ENCODE measurements at regions of chr5 and their contacts with region 1.

Region 1: GRCh38 chr5:80255732-80256479 is at the start of gene SERINC5:
- DNase-seq: peak; percentile 75
- ATAC-seq: peak; percentile 84
- H3K4me3 Mint-ChIP-seq: peak within 1 kb of the TSS; percentile 96
- H3K27ac Mint-ChIP-seq: peak within 1 kb of the TSS; percentile 95
- H3K4me1 Mint-ChIP-seq: peaks cover 29% of the 10 kb centered on the region
- H3K27me3 Mint-ChIP-seq: no peaks in the 10 kb centered on the region
- CTCF ChIP-seq: no peak
- total RNA-seq, gene SERINC5: 4.4 and 5.3 TPM in 2 replicates

Region 2: GRCh38 chr5:79111960-79112702 is 1143.8 kb before region 1 on chr5:
- CTCF ChIA-PET with region 1: no interaction called
- POLR2A ChIA-PET with region 1: no interaction called
- intact Hi-C with region 1: no loop called
- DNase-seq: no peak
- ATAC-seq: no peak
- H3K4me3 Mint-ChIP-seq: no peak overlapping the region
- H3K27ac Mint-ChIP-seq: no peak overlapping the region
- H3K4me1 Mint-ChIP-seq: no peaks in the 10 kb centered on the region
- H3K27me3 Mint-ChIP-seq: peaks cover 50% of the 10 kb centered on the region
- CTCF ChIP-seq: no peak

Region 3: GRCh38 chr5:79514391-79515105 is 741.4 kb before region 1 on chr5:
- CTCF ChIA-PET with region 1: no interaction called
- POLR2A ChIA-PET with region 1: interaction called, 3 read pairs
- intact Hi-C with region 1: loop called (anchors 5 kb)
- DNase-seq: peak; percentile 85
- ATAC-seq: peak; percentile 77
- H3K4me3 Mint-ChIP-seq: peak overlapping the region; percentile 91
- H3K27ac Mint-ChIP-seq: peak overlapping the region; percentile 89
- H3K4me1 Mint-ChIP-seq: peaks cover 28% of the 10 kb centered on the region
- H3K27me3 Mint-ChIP-seq: peaks cover 24% of the 10 kb centered on the region
- CTCF ChIP-seq: no peak

Region 4: GRCh38 chr5:79990598-79991507 is 265.1 kb before region 1 on chr5 and contains the start of gene MTX3:
- CTCF ChIA-PET with region 1: no interaction called
- POLR2A ChIA-PET with region 1: interaction called, 3 read pairs
- intact Hi-C with region 1: loop called (anchors 1 kb)
- DNase-seq: peak; percentile 74
- ATAC-seq: peak; percentile 95
- H3K4me3 Mint-ChIP-seq: peak within 1 kb of the TSS; percentile 88
- H3K27ac Mint-ChIP-seq: peak within 1 kb of the TSS; percentile 84
- H3K4me1 Mint-ChIP-seq: peaks cover 23% of the 10 kb centered on the region
- H3K27me3 Mint-ChIP-seq: peaks cover 2% of the 10 kb centered on the region
- CTCF ChIP-seq: no peak
- total RNA-seq, gene MTX3: 20.0 and 21.4 TPM in 2 replicates

Region 5: GRCh38 chr5:80141147-80141671 is 114.7 kb before region 1 on chr5:
- CTCF ChIA-PET with region 1: no interaction called
- POLR2A ChIA-PET with region 1: interaction called, 12 read pairs
- intact Hi-C with region 1: no loop called
- DNase-seq: no peak
- ATAC-seq: no peak
- H3K4me3 Mint-ChIP-seq: no peak overlapping the region
- H3K27ac Mint-ChIP-seq: no peak overlapping the region
- H3K4me1 Mint-ChIP-seq: peaks cover 39% of the 10 kb centered on the region
- H3K27me3 Mint-ChIP-seq: no peaks in the 10 kb centered on the region
- CTCF ChIP-seq: no peak

Region 6: GRCh38 chr5:80238778-80239679 is 16.9 kb before region 1 on chr5:
- CTCF ChIA-PET with region 1: no interaction called
- POLR2A ChIA-PET with region 1: interaction called, 21 read pairs
- intact Hi-C with region 1: loop called (anchors 1 kb)
- DNase-seq: no peak
- ATAC-seq: no peak
- H3K4me3 Mint-ChIP-seq: no peak overlapping the region
- H3K27ac Mint-ChIP-seq: no peak overlapping the region
- H3K4me1 Mint-ChIP-seq: peaks cover 27% of the 10 kb centered on the region
- H3K27me3 Mint-ChIP-seq: no peaks in the 10 kb centered on the region
- CTCF ChIP-seq: no peak

Region 7: DNA sequence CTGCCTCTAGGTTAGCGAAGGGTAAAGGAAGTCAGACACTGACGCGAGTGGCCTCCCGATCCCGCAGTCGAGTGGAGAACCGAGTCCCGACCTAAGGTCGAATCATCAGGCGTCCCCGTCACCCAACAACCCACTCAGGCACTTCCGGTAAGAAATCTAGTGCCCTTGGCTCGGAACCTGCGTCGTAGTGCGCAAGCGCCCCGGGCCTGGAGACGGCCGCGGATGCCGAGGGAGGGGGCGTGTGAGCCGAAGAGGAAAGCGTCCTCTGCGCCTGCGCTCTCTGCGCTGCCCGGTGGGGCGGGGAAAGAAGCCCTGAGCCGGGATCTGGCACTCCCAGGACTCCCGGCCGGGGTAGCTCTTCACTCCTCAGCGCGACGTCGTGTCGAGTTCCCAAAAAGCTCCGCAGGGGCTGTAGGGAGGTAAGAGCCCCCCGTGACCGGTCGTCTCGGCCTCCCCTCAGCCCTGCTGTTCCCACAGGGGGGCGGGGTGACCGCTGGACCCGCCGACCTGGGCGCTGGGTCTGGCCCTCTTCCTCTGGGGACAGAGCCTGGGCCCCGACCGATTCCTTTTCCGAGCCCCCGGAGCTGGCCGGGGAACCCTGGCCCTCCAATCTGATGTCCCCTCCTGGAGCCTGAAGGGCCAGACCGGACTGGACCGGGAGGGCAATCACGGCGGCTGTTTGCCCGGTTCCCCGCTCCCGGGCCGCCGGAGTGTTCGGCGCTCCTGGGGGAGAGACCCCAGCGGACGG is 152.0 kb after region 1 on chr5 and contains the start of gene ZFYVE16:
- CTCF ChIA-PET with region 1: no interaction called
- POLR2A ChIA-PET with region 1: interaction called, 21 read pairs
- intact Hi-C with region 1: loop called (anchors 1 kb)
- DNase-seq: peak; percentile 95
- ATAC-seq: peak; percentile 84
- H3K4me3 Mint-ChIP-seq: peak within 1 kb of the TSS; percentile 91
- H3K27ac Mint-ChIP-seq: peak within 1 kb of the TSS; percentile 95
- H3K4me1 Mint-ChIP-seq: peaks cover 17% of the 10 kb centered on the region
- H3K27me3 Mint-ChIP-seq: no peaks in the 10 kb centered on the region
- CTCF ChIP-seq: no peak
- total RNA-seq, gene ZFYVE16: 19.8 and 21.1 TPM in 2 replicates

Region 8: DNA sequence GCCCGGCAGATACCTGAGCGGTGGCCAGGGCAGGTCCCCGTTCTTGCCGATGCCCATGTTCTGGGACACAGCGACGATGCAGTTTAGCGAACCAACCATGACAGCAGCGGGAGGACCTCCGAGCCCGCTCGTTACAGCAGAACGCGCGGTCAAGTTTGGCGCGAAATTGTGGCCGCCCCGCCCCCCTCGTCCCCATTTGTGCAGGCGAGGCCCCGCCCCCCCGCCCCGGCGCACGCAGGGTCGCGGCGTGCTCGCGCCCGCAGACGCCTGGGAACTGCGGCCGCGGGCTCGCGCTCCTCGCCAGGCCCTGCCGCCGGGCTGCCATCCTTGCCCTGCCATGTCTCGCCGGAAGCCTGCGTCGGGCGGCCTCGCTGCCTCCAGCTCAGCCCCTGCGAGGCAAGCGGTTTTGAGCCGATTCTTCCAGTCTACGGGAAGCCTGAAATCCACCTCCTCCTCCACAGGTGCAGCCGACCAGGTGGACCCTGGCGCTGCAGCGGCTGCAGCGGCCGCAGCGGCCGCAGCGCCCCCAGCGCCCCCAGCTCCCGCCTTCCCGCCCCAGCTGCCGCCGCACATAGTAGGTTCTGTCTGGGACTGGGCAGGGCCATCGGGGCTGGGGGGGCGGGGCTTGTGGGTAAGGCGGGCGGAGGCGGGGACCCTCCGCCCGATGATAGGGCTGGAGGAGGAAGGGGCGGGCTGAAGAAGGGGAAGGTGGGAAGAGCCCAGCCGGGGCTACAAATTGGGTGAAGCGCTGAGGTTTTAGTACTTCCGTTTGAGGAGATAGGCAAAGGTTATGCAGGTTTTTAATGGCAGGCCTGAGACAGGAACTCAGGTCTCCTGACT is 398.7 kb after region 1 on chr5 and contains the starts of genes DHFR and MSH3:
- CTCF ChIA-PET with region 1: no interaction called
- POLR2A ChIA-PET with region 1: interaction called, 12 read pairs
- intact Hi-C with region 1: loop called (anchors 2 kb)
- DNase-seq: peak; percentile 79
- ATAC-seq: peak; percentile 73
- H3K4me3 Mint-ChIP-seq: peak within 1 kb of the TSS; percentile 97
- H3K27ac Mint-ChIP-seq: peak within 1 kb of the TSS; percentile 99
- H3K4me1 Mint-ChIP-seq: peaks cover 26% of the 10 kb centered on the region
- H3K27me3 Mint-ChIP-seq: no peaks in the 10 kb centered on the region
- CTCF ChIP-seq: no peak
- total RNA-seq, gene DHFR: 11.1 and 12.7 TPM in 2 replicates
- total RNA-seq, gene MSH3: 22.9 and 24.0 TPM in 2 replicates

Region 9: DNA sequence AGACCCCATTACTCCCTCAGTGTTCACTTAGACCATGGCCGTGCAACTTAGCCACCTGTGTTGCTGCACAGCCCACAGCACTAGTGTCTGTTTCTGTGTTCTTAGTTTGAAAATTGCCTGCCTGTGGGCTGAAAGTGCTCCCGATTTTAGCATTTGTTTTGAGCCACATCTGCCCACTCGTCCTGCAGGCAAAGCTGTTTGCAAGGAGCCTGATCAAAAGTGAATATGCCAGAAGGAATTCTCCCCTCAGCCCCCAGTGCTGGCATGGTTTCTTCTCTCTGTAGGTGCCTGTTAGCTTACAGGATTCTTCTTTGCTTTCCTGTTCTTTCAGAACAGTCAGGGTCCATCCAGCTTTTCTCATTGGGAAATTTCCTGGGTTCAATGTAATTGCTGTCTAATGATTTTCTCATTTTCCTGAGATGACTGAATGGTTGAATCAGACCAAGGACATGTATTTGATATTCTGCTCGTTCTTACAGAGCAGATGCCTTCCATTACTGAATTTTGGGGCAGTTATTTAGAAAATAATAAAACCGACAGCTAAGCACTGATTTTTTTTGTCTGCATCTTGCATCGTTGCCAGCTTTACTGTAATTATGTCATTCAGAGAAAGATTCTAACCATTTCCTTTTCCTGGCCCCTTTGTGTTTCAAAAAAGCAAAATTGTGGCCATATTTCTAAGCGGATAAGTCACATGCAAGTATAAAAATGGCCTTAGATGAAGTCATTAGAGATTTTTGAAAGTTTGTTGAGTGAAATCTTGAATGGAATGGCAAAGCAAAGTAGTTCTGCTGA is 866.1 kb after region 1 on chr5:
- CTCF ChIA-PET with region 1: no interaction called
- POLR2A ChIA-PET with region 1: no interaction called
- intact Hi-C with region 1: no loop called
- DNase-seq: no peak
- ATAC-seq: no peak
- H3K4me3 Mint-ChIP-seq: no peak overlapping the region
- H3K27ac Mint-ChIP-seq: no peak overlapping the region
- H3K4me1 Mint-ChIP-seq: no peaks in the 10 kb centered on the region
- H3K27me3 Mint-ChIP-seq: peaks cover 6% of the 10 kb centered on the region
- CTCF ChIP-seq: no peak